ENCODE measurements at regions of chr12 and their contacts with region 1.

Region 1: GRCh38 chr12:64696080-64696741 is 63.0 kb downstream of the GNS start:
- DNase-seq: peak in 2 of 14 experiments; percentile 42 to 56
- ATAC-seq: no peak
- H3K4me3 ChIP-seq: no peak overlapping the region
- H3K4me3 Mint-ChIP-seq: no peak overlapping the region
- H3K27ac ChIP-seq: peak overlapping the region in 1 of 2 donors; percentile 29
- H3K27ac Mint-ChIP-seq: peak overlapping the region; percentile 85
- H3K4me1 ChIP-seq: peaks cover 70% of the 10 kb centered on the region
- H3K4me1 Mint-ChIP-seq: peaks cover 77% of the 10 kb centered on the region
- H3K27me3 ChIP-seq: no peaks in the 10 kb centered on the region
- H3K27me3 Mint-ChIP-seq: no peaks in the 10 kb centered on the region
- CTCF ChIP-seq: peak; percentile 24

Region 2: GRCh38 chr12:64390275-64390851 is 305.8 kb before region 1 on chr12 and contains the start of gene C12orf56:
- CTCF ChIA-PET with region 1: no interaction called
- POLR2A ChIA-PET with region 1: no interaction called
- intact Hi-C with region 1: no loop called
- DNase-seq: peak in 7 of 14 experiments; percentile 10 to 43 (median 37)
- ATAC-seq: peak; percentile 52
- H3K4me3 ChIP-seq: peak within 1 kb of the TSS; percentile 48
- H3K4me3 Mint-ChIP-seq: peak within 1 kb of the TSS; percentile 89
- H3K27ac ChIP-seq: no peak within 1 kb of the TSS
- H3K27ac Mint-ChIP-seq: no peak within 1 kb of the TSS
- H3K4me1 ChIP-seq: peaks cover 26% of the 10 kb centered on the region
- H3K4me1 Mint-ChIP-seq: peaks cover 23% of the 10 kb centered on the region
- H3K27me3 ChIP-seq: no peaks in the 10 kb centered on the region
- H3K27me3 Mint-ChIP-seq: peaks cover 11% of the 10 kb centered on the region
- CTCF ChIP-seq: no peak
- total RNA-seq, gene C12orf56: 0.08 to 0.17 TPM

Region 3: DNA sequence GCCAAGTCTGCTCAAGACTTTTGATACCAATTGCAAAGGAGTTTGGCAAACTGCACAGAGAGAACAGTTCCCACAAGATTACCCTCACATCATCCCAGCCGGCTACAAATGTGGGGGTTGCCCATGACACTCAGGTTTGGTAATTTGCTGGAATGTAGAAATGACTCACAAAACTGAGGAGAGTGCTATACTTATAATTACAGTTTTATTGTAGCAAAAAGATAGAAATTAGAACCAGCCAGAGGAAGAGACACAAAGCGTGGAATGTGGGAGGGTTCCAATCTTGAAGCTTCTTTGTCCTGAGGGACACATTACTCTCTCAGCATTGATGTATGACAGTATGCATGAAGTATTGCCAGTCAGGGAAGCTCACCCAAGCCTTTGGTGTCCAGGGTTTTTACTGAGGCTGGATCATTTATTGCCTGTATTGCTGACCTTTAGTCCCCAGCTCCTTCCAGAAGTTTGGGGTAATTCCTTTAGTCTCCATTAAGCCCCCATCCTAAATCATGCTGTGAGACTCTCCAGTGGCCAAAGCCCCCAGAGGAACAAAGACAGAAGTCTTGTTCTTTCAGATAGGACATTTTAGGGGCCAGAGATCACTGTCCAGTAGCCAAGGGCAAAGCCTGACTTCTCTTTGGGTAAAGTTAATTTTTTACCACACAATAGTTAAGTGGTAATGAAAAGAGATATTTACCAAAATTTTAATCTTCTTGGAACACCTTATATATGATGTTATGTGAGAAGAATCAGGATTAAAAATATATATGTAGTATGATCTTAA is 234.4 kb before region 1 on chr12:
- CTCF ChIA-PET with region 1: no interaction called
- POLR2A ChIA-PET with region 1: no interaction called
- intact Hi-C with region 1: no loop called
- DNase-seq: no peak
- ATAC-seq: no peak
- H3K4me3 ChIP-seq: no peak overlapping the region
- H3K4me3 Mint-ChIP-seq: no peak overlapping the region
- H3K27ac ChIP-seq: no peak overlapping the region
- H3K27ac Mint-ChIP-seq: no peak overlapping the region
- H3K4me1 ChIP-seq: peaks cover 10% of the 10 kb centered on the region
- H3K4me1 Mint-ChIP-seq: peaks cover 31% of the 10 kb centered on the region
- H3K27me3 ChIP-seq: no peaks in the 10 kb centered on the region
- H3K27me3 Mint-ChIP-seq: no peaks in the 10 kb centered on the region
- CTCF ChIP-seq: no peak

Region 4: DNA sequence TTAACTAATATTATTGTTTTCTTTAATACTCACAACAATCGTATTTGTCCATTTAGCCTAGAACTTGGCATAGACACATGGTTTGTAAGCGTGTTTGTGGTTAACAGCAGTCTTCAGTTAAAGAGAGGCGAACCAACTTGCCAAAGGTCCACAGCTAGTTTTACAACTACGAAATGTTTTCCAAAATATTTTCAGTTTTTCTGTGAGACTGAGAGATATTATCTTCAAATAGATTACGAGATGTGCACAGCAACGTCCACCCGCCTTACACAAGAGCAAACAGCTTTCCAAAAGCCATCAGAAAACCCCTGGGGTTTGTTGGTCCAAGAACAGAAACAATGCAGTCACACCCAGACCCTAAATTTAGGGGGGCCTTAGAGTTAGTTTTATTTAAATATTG is 144.5 kb before region 1 on chr12:
- CTCF ChIA-PET with region 1: interaction called, 104 read pairs
- POLR2A ChIA-PET with region 1: interaction called, 24 read pairs
- intact Hi-C with region 1: loop called (anchors 1 kb)
- DNase-seq: no peak
- ATAC-seq: no peak
- H3K4me3 ChIP-seq: no peak overlapping the region
- H3K4me3 Mint-ChIP-seq: no peak overlapping the region
- H3K27ac ChIP-seq: no peak overlapping the region
- H3K27ac Mint-ChIP-seq: no peak overlapping the region
- H3K4me1 ChIP-seq: no peaks in the 10 kb centered on the region
- H3K4me1 Mint-ChIP-seq: peaks cover 13% of the 10 kb centered on the region
- H3K27me3 ChIP-seq: no peaks in the 10 kb centered on the region
- H3K27me3 Mint-ChIP-seq: no peaks in the 10 kb centered on the region
- CTCF ChIP-seq: no peak

Region 5: GRCh38 chr12:64625243-64626077 is 70.8 kb before region 1 on chr12:
- CTCF ChIA-PET with region 1: interaction called, 10 read pairs
- POLR2A ChIA-PET with region 1: no interaction called
- intact Hi-C with region 1: no loop called
- DNase-seq: peak in 4 of 14 experiments; percentile 38 to 80 (median 58)
- ATAC-seq: peak; percentile 68
- H3K4me3 ChIP-seq: peak overlapping the region; percentile 38
- H3K4me3 Mint-ChIP-seq: peak overlapping the region; percentile 87
- H3K27ac ChIP-seq: peak overlapping the region; percentile 32 to 71
- H3K27ac Mint-ChIP-seq: peak overlapping the region; percentile 81
- H3K4me1 ChIP-seq: peaks cover 68% of the 10 kb centered on the region
- H3K4me1 Mint-ChIP-seq: peaks cover 78% of the 10 kb centered on the region
- H3K27me3 ChIP-seq: no peaks in the 10 kb centered on the region
- H3K27me3 Mint-ChIP-seq: no peaks in the 10 kb centered on the region
- CTCF ChIP-seq: no peak

Region 6: DNA sequence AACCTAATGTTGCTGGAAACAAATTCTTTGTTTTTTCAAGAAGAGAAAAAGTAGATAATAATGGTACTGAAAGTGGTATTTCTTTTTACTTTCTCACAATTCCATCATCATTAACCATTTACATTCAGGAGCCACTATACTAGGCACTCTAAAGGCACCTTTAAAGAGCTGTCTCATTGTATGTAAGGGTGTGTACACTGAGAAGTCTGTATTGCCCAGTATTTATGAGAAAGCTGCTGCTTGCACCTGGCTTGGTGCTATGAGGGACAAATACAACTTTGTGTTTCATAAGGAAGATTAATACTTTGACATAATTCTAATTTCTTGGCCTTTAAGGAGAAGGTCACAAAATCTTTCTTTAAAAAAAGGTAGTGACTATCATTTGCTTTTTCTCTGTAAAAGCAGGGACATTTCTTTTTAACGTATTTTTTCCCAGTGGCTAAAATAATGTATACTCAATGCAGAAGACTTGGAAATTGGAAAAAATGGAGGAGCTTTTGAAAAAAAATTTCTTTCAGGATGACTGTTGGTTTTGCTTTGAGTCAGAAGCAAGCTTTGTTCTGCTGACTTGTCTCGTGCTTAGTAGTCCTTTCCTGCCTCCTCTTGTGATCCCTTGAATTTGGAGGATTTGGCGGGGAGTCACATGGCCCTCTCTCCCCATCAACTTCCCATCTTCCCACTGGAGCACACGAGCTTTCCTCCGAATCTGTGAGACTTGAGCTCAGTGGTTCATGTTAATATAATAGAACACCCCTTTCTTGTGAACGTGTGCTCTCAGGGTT is 35.8 kb before region 1 on chr12:
- CTCF ChIA-PET with region 1: interaction called, 9 read pairs
- POLR2A ChIA-PET with region 1: interaction called, 808 read pairs
- intact Hi-C with region 1: loop called (anchors 5 kb)
- DNase-seq: no peak
- ATAC-seq: no peak
- H3K4me3 ChIP-seq: no peak overlapping the region
- H3K4me3 Mint-ChIP-seq: peak overlapping the region; percentile 40
- H3K27ac ChIP-seq: peak overlapping the region; percentile 29 to 51
- H3K27ac Mint-ChIP-seq: peak overlapping the region; percentile 93
- H3K4me1 ChIP-seq: peaks cover 80% of the 10 kb centered on the region
- H3K4me1 Mint-ChIP-seq: peaks cover 91% of the 10 kb centered on the region
- H3K27me3 ChIP-seq: no peaks in the 10 kb centered on the region
- H3K27me3 Mint-ChIP-seq: no peaks in the 10 kb centered on the region
- CTCF ChIP-seq: no peak

Region 7: GRCh38 chr12:64679487-64679983 is 16.7 kb before region 1 on chr12:
- CTCF ChIA-PET with region 1: interaction called, 10 read pairs
- POLR2A ChIA-PET with region 1: interaction called, 808 read pairs
- intact Hi-C with region 1: loop called (anchors 2 kb)
- DNase-seq: peak; percentile 53 to 90 (median 68)
- ATAC-seq: peak; percentile 66
- H3K4me3 ChIP-seq: peak overlapping the region; percentile 19
- H3K4me3 Mint-ChIP-seq: peak overlapping the region; percentile 59
- H3K27ac ChIP-seq: peak overlapping the region; percentile 80 to 91
- H3K27ac Mint-ChIP-seq: peak overlapping the region; percentile 98
- H3K4me1 ChIP-seq: peaks cover 99% of the 10 kb centered on the region
- H3K4me1 Mint-ChIP-seq: peaks cover 90% of the 10 kb centered on the region
- H3K27me3 ChIP-seq: no peaks in the 10 kb centered on the region
- H3K27me3 Mint-ChIP-seq: no peaks in the 10 kb centered on the region
- CTCF ChIP-seq: no peak

Region 8: DNA sequence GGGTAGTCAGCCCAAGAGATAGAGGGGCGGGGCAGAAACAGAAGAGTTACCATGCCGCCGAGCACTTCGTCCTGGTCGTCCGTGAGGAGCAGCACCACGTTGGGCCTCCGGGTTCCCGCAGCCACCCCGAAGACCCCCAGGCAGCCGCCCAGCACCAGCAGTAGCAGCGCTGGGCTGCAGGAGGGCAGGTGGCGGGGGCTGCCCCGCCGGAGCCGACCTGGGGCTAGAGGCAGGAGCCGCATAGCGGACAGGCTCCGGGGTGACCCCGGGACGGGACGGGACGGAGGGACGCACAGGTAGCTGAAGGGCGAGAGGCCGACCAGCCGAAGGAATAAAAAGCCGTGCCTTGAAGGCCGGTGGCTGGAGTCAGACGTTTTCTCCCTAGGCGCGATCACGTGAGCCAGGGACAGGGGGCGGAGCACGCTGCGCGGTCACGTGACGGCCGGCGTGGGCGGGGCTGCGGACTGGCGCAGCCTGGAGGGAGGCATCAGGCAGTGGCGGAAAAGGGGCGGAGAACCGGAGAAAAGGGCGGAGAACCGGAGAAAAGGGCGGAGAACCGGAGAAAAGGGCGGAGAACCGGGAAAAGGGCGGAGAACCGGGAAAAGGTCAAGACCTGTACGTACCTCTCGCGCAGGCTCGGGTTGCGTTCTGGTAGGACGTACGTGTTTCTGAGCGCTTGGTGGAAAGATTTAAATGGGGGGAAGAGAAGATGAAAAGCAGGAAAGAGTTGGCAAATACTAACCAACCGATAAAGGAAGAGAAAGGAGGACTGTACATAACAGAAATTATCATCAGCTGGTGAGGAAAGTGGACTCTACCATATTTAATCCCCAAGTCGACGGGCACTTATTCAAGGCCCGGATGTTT is 63.1 kb after region 1 on chr12 and contains the start of gene GNS:
- CTCF ChIA-PET with region 1: no interaction called
- POLR2A ChIA-PET with region 1: no interaction called
- intact Hi-C with region 1: no loop called
- DNase-seq: peak; percentile 81 to 95 (median 90)
- ATAC-seq: peak; percentile 87
- H3K4me3 ChIP-seq: peak within 1 kb of the TSS; percentile 62
- H3K4me3 Mint-ChIP-seq: peak within 1 kb of the TSS; percentile 99
- H3K27ac ChIP-seq: peak within 1 kb of the TSS; percentile 52 to 54
- H3K27ac Mint-ChIP-seq: peak within 1 kb of the TSS; percentile 85
- H3K4me1 ChIP-seq: peaks cover 23% of the 10 kb centered on the region
- H3K4me1 Mint-ChIP-seq: peaks cover 54% of the 10 kb centered on the region
- H3K27me3 ChIP-seq: no peaks in the 10 kb centered on the region
- H3K27me3 Mint-ChIP-seq: no peaks in the 10 kb centered on the region
- CTCF ChIP-seq: no peak
- total RNA-seq, gene GNS: 8.7 to 10.0 TPM

Region 9: GRCh38 chr12:65106948-65107347 is 410.7 kb after region 1 on chr12:
- CTCF ChIA-PET with region 1: no interaction called
- POLR2A ChIA-PET with region 1: no interaction called
- intact Hi-C with region 1: no loop called
- DNase-seq: no peak
- ATAC-seq: no peak
- H3K4me3 ChIP-seq: no peak overlapping the region
- H3K4me3 Mint-ChIP-seq: no peak overlapping the region
- H3K27ac ChIP-seq: no peak overlapping the region
- H3K27ac Mint-ChIP-seq: no peak overlapping the region
- H3K4me1 ChIP-seq: no peaks in the 10 kb centered on the region
- H3K4me1 Mint-ChIP-seq: no peaks in the 10 kb centered on the region
- H3K27me3 ChIP-seq: peaks cover 5 to 7% of the 10 kb centered on the region in 2 experiments
- H3K27me3 Mint-ChIP-seq: peaks cover 22% of the 10 kb centered on the region
- CTCF ChIP-seq: no peak